ENCODE measurements at regions of chr3 and their contacts with region 1.

Region 1: DNA sequence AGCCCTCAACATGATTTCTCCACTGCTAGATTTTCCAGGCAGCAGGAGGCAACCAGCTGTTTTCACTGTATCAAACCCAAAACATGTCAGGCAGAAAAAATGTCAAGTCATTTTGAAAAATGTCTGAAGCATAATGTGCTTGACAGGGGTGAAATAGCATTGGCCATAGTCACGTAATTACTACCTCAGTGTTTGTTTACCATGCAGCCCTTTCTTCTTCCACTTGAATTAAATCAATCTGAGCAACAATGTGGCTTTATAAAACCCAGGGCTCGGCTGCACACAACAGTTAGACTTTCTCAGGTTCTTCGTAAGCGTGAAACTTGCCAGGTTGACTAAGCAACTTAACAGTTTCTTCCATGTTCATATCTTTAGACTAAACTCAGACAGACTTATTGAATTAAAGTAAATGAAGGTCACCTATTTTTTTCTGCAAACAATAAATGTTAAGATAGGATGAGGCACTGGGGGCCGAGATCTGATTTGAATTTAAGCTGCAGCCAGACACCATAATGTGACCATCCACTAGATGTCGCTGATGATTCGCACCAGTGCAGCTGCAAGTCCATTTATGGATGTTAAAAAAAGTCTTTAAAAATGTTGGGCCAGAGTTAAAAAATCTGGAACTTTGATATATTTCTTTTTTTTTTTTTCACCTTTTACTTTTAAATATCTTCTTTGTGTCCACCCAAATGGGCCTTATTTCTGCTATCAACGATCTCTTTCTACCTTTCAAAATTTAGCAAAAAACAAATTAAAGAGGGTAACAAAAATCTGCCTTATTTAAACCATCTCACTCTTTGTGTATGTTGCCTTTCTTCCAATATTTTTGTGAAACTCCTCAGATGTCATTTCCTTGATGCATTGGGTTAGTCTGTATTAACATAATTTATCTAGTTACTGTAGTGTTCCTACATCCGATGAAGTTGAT is 305.9 kb downstream of the CACNA2D3 start:
- DNase-seq: peak in 1 of 2 donors; percentile 59
- ATAC-seq: no peak
- H3K4me3 ChIP-seq: no peak overlapping the region
- H3K27ac ChIP-seq: no peak overlapping the region
- H3K4me1 ChIP-seq: no peaks in the 10 kb centered on the region
- H3K27me3 ChIP-seq: no peaks in the 10 kb centered on the region

Region 2: DNA sequence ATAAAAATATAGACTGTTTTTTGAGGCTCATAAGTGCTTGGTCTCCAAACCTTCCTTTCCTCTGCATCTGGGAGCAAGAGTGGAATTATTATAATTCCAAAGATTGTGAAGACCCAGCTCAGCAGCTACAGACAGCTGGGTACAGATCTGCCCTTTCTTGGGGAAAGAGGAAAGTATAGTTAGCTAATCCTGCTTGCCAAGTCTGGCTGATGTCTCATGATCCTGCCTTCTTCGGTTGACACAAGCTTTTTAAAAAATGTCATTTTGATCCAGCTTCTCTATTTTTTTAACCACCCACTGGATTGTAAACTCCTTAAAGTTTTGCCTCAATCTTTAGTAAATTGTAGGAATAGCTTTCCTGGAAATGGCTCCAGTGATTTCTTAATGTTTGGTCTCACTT is 318.5 kb after region 1 on chr3:
- intact Hi-C with region 1: no loop called
- DNase-seq: no peak
- ATAC-seq: no peak
- H3K4me3 ChIP-seq: no peak overlapping the region
- H3K27ac ChIP-seq: no peak overlapping the region
- H3K4me1 ChIP-seq: peaks cover 0 to 1% of the 10 kb centered on the region in 2 donors
- H3K27me3 ChIP-seq: no peaks in the 10 kb centered on the region

Region 3: DNA sequence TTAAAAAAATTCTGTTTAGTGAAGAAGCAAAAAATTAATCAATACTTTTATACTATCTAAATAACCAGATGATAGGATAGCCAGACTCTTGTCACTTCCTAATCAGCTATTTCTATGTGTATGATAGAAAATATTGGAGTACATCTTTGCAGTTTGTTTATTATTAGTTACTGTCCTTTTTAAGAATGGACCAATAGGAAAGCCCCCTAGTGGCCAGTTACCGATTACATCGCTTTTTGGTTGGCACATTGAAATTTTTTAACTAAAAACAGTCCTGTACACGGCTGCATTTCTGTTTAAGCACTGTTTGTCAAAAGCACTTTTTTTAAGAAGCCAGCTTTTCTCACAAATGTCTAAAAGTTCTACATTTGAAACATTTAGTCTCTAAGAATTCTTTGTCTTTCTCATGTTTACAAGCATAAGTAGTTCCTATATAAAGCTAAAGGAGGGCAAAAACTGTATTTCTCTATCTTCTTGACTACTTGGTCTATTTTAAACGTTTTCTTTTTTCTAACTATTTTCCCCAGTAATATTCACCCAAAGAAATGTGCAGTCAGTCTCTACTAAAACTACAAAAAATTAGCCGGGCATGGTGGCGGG is 752.8 kb after region 1 on chr3:
- intact Hi-C with region 1: loop called in 1 of 2 experiments (anchors 10 kb)
- DNase-seq: no peak
- ATAC-seq: no peak
- H3K4me3 ChIP-seq: no peak overlapping the region
- H3K27ac ChIP-seq: no peak overlapping the region
- H3K4me1 ChIP-seq: no peaks in the 10 kb centered on the region
- H3K27me3 ChIP-seq: no peaks in the 10 kb centered on the region